Activated T-helper 2 cell treated with anti-CD3 and anti-CD28 coated beads, Interferon-gamma antibody, Interleukin-2, Interleukin-4, amounts not matched to agents 10 μg/mL and 5 μg/mL and 100 μg/mL, durations not matched to agents 14 hours and 24 hours and 36 hours (primary cell): ENCODE measurements at regions of chr1 and their contacts with region 1.

Region 1: GRCh38 chr1:163315773-163316374 is 5.9 kb upstream of the NUF2 start:
- DNase-seq: no peak
- H3K4me3 Mint-ChIP-seq: no peak overlapping the region
- H3K27ac Mint-ChIP-seq: no peak overlapping the region
- H3K4me1 Mint-ChIP-seq: peaks cover 5% of the 10 kb centered on the region
- H3K27me3 Mint-ChIP-seq: no peaks in the 10 kb centered on the region

Region 2: DNA sequence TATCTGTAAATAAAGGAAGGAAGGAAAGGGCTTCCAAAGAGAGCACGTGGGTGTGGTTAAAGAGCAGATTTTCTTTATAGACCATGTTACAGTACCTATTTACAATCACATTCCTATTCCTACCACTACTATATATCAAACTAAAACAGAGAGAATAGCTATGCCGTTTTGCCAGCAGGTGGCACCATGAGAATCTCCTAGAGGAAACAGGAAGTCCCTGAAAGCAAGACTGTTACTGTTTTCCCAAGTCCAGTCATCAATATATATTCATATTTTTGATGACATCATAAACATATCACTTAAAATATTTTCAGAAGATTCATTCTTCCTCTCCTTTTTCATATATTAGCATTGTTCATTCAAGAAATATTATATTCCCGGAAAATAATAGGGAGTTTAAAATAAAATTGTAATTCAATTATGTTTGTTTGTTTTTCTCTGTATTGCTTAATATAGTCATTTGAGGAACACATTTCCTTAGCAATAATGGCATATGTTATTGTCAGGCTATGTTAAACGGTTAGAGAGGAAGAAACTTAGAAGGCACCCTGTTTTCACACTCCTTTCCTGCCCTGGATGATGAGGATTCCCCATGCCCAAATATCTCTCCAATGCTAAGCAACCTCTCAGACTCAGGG is 461.5 kb before region 1 on chr1:
- intact Hi-C with region 1: loop called (anchors 1 kb)
- DNase-seq: peak; percentile 12
- H3K4me3 Mint-ChIP-seq: no peak overlapping the region
- H3K27ac Mint-ChIP-seq: no peak overlapping the region
- H3K4me1 Mint-ChIP-seq: no peaks in the 10 kb centered on the region
- H3K27me3 Mint-ChIP-seq: peaks cover 14% of the 10 kb centered on the region

Region 3: GRCh38 chr1:163346346-163346870 is 30.5 kb after region 1 on chr1:
- intact Hi-C with region 1: no loop called
- DNase-seq: no peak
- H3K4me3 Mint-ChIP-seq: no peak overlapping the region
- H3K27ac Mint-ChIP-seq: no peak overlapping the region
- H3K4me1 Mint-ChIP-seq: peaks cover 3% of the 10 kb centered on the region
- H3K27me3 Mint-ChIP-seq: no peaks in the 10 kb centered on the region

Region 4: GRCh38 chr1:163471779-163472650 is 156.1 kb after region 1 on chr1:
- intact Hi-C with region 1: no loop called
- DNase-seq: no peak
- H3K4me3 Mint-ChIP-seq: no peak overlapping the region
- H3K27ac Mint-ChIP-seq: no peak overlapping the region
- H3K4me1 Mint-ChIP-seq: no peaks in the 10 kb centered on the region
- H3K27me3 Mint-ChIP-seq: no peaks in the 10 kb centered on the region